Endothelial cell of umbilical vein (primary cell): ENCODE measurements at regions of chr20 and their contacts with region 1.

Region 1: DNA sequence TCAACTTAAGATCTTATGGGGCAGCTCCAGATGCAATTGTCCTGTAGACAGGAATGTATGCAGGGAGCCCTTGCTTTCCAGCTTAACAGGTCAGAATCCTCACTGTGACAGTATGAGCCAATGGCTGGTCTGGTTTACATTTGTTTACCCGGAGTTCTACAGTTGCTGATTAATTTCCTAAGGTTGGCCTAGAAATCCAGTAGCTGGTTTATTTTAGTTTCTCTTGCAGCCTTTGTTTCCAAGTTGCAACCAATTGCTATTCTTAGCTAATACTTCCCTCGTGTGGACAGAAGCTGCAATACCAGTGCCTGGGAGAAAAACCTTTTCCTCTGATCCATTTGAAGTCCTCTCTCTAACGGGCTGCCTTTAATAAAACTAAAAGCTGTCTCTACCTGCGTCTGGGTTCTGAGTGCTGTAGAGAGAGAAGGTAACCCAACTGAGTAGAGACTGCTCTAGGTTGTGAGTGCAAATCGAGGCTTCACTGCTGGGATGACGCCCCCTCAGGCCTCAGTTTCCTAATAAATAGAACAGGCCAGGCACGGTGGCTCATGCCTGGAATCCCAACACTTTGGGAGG is 45.9 kb downstream of the ZNF217 start:
- DNase-seq: peak; percentile 68
- H3K4me3 ChIP-seq: no peak overlapping the region
- H3K27ac ChIP-seq: no peak overlapping the region
- H3K4me1 ChIP-seq: no peaks in the 10 kb centered on the region
- H3K27me3 ChIP-seq: no peaks in the 10 kb centered on the region
- CTCF ChIP-seq: peak; percentile 48 to 65
- POLR2A ChIP-seq: no peak

Region 2: GRCh38 chr20:52242237-52243230 is 1305.2 kb before region 1 on chr20:
- CTCF ChIA-PET with region 1: interaction called, 29 read pairs
- POLR2A ChIA-PET with region 1: no interaction called
- dilution Hi-C with region 1: no loop called
- intact Hi-C with region 1: loop called (anchors 2 kb)
- DNase-seq: peak; percentile 22
- H3K4me3 ChIP-seq: no peak overlapping the region
- H3K27ac ChIP-seq: no peak overlapping the region
- H3K4me1 ChIP-seq: no peaks in the 10 kb centered on the region
- H3K27me3 ChIP-seq: no peaks in the 10 kb centered on the region
- CTCF ChIP-seq: peak in 1 of 2 donors; percentile 19
- POLR2A ChIP-seq: no peak

Region 3: DNA sequence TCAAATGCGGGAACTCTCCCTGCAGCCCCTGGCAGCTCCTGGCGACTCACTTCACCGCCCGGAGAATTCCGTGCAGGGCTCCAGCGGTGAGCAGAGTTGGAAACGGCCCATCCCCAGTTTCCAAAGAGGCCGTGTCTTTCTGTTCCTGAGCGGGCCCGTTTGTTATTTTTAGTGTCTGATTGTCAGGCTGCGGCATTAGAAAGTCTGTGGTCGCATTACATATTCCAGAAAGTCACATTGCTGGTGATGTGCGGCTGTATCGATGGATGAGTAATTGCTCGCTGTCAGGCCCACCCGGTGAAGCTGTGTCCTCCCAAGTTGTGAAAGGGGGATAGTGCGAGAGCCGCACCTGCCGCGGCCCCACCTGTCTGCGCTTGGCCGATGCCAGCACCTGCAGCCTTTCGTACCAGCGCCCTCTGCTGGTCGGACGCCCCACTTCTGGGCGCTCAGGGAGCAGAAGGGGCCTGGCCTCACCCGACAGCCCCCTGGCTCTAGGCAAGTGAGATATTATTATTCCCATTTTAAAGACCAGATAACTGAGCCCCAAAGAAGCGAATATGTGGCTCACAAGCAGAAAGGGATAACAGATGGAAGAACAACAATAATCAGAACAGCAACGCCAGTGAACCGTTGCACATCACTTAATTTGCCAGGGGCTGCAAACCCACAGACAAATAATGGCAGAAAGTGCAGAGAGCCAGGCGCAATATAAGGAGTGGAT is 330.7 kb before region 1 on chr20:
- CTCF ChIA-PET with region 1: interaction called, 10 read pairs
- POLR2A ChIA-PET with region 1: no interaction called
- dilution Hi-C with region 1: no loop called
- intact Hi-C with region 1: no loop called
- DNase-seq: peak; percentile 19
- H3K4me3 ChIP-seq: no peak overlapping the region
- H3K27ac ChIP-seq: no peak overlapping the region
- H3K4me1 ChIP-seq: no peaks in the 10 kb centered on the region
- H3K27me3 ChIP-seq: no peaks in the 10 kb centered on the region
- CTCF ChIP-seq: peak; percentile 74 to 89
- POLR2A ChIP-seq: no peak

Region 4: GRCh38 chr20:53245574-53245973 is 302.2 kb before region 1 on chr20:
- CTCF ChIA-PET with region 1: no interaction called
- POLR2A ChIA-PET with region 1: no interaction called
- dilution Hi-C with region 1: no loop called
- intact Hi-C with region 1: loop called (anchors 10 kb)
- DNase-seq: no peak
- H3K4me3 ChIP-seq: no peak overlapping the region
- H3K27ac ChIP-seq: no peak overlapping the region
- H3K4me1 ChIP-seq: no peaks in the 10 kb centered on the region
- H3K27me3 ChIP-seq: no peaks in the 10 kb centered on the region
- CTCF ChIP-seq: no peak
- POLR2A ChIP-seq: no peak

Region 5: DNA sequence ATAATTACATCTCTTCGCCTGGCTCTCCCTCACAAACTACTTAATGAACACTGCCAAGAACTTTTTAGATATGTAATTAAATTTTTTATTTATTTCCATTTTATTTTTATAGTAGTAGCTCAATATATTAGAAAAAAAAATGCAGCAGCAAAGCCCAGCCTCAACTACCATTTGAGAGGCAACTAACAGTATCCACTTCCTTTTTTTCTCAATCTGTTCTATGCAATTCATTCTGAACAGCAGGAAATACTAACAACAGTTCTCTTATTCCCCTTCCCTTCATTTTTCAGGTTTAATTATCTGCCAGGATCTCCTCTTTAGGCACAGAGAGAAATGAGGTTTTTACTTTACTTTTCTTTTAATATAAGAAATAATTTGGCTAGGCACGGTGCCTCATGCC is 66.8 kb before region 1 on chr20:
- CTCF ChIA-PET with region 1: no interaction called
- POLR2A ChIA-PET with region 1: no interaction called
- dilution Hi-C with region 1: no loop called
- intact Hi-C with region 1: no loop called
- DNase-seq: no peak
- H3K4me3 ChIP-seq: no peak overlapping the region
- H3K27ac ChIP-seq: no peak overlapping the region
- H3K4me1 ChIP-seq: no peaks in the 10 kb centered on the region
- H3K27me3 ChIP-seq: no peaks in the 10 kb centered on the region
- CTCF ChIP-seq: no peak
- POLR2A ChIP-seq: no peak